MCF 10A (cell line): ENCODE measurements at regions of chr7 and their contacts with region 1.

Region 1: DNA sequence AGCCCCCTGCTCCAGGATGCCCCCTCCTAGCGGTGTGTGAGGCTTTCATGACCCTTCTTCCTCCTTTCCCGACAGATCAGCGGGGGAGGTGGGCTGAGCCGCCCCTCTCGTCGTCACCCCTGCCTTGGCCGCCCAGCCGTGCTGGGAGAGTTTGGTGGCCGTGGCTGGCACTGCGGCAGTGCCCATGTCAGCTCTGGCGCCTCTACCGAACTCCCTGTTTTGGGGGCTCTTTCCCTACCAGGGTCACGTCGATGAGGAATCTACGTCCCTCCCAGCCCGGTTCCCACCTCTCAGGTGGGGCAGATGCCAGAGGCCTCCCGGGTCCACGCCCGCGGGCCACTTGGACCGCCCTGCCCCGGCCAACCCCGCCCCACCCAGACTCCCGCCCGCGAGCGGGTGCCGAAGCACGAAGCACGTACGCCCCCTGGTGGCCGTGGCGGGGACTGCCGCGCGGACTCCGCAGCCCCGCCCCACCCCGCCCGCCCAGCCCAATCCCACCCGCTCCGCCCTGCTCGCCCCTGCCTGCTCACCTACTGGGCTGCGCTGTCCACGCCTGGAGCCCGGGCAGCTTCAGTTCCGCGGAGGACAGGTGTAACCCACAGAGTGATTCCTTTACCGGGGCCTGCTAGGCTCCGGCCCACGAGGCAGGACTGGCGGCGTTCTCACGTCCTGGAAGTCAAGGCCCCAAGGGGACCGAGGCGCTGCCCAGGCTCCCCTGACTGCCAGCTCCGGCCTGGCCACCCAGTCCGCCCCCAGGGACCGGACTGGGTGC is 127.1 kb downstream of the UBE2H start:
- DNase-seq: peak; percentile 72
- H3K4me3 Mint-ChIP-seq: peak overlapping the region; percentile 89
- H3K27ac Mint-ChIP-seq: peak overlapping the region; percentile 5
- H3K4me1 Mint-ChIP-seq: peaks cover 20% of the 10 kb centered on the region
- H3K27me3 Mint-ChIP-seq: no peaks in the 10 kb centered on the region
- CTCF ChIP-seq: peak; percentile 91

Region 2: DNA sequence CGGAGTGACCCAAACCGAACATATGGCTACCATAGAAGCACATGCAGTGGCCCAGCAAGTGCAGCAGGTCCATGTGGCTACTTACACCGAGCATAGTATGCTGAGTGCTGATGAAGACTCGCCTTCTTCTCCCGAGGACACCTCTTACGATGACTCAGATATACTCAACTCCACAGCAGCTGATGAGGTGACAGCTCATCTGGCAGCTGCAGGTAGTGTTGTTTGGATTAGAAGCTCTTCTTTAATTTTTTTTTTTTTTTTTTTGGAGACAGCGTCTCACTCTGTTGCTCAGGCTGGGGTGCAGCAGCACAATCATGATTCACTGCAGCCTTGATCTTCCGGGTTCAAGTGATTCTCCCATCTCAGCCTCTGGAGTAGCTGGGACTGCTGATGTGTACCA is 168.3 kb before region 1 on chr7:
- CTCF ChIA-PET with region 1: interaction called, 10 read pairs
- POLR2A ChIA-PET with region 1: no interaction called
- intact Hi-C with region 1: no loop called
- DNase-seq: peak; percentile 83
- H3K4me3 Mint-ChIP-seq: no peak overlapping the region
- H3K27ac Mint-ChIP-seq: peak overlapping the region; percentile 53
- H3K4me1 Mint-ChIP-seq: peaks cover 9% of the 10 kb centered on the region
- H3K27me3 Mint-ChIP-seq: no peaks in the 10 kb centered on the region
- CTCF ChIP-seq: no peak

Region 3: DNA sequence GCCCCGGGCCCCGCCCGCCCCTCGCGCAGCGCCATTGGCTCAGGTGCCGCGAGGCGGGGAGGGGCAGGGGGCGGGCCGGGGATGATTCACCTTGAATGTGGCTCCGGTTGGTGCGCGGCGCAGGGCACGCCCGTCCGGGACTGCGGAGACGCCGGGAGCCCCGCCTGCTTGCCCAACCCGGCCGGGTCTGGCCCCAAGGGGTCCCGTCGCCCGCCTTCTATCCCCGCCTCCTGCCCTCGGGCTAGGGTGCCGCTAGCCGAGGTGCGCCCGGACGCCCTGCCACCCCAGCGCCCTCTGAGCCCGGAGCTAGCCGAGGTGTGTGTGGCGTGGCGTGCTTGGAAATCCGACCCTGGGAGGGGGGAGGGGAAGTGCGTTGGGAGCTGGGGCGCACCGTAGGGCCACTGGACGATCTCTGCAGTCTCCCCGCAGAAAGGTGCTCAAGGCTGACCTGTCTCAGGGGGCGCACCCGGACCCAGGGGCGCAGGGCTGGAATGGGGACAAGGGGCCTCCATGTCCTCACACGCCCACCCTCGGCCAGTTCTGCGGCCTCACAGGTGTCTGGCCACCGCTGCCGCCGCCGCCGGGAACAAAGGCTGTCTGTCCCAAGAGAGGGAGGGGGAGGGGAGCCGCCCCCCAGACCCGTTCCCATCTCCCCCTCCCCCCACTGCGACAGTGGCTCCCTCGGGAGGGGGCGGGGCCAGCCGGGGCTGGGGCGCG is 45.3 kb before region 1 on chr7:
- CTCF ChIA-PET with region 1: interaction called, 5 read pairs
- POLR2A ChIA-PET with region 1: interaction called, 9 read pairs
- intact Hi-C with region 1: loop called (anchors 2 kb)
- DNase-seq: peak; percentile 91
- H3K4me3 Mint-ChIP-seq: peak overlapping the region; percentile 68
- H3K27ac Mint-ChIP-seq: no peak overlapping the region
- H3K4me1 Mint-ChIP-seq: no peaks in the 10 kb centered on the region
- H3K27me3 Mint-ChIP-seq: no peaks in the 10 kb centered on the region
- CTCF ChIP-seq: no peak

Region 4: GRCh38 chr7:129853661-129854300 is 28.1 kb after region 1 on chr7:
- CTCF ChIA-PET with region 1: interaction called, 9 read pairs
- POLR2A ChIA-PET with region 1: interaction called, 13 read pairs
- intact Hi-C with region 1: no loop called
- DNase-seq: peak; percentile 97
- H3K4me3 Mint-ChIP-seq: peak overlapping the region; percentile 54
- H3K27ac Mint-ChIP-seq: peak overlapping the region; percentile 92
- H3K4me1 Mint-ChIP-seq: peaks cover 52% of the 10 kb centered on the region
- H3K27me3 Mint-ChIP-seq: no peaks in the 10 kb centered on the region
- CTCF ChIP-seq: no peak

Region 5: GRCh38 chr7:129875745-129876411 is 50.2 kb after region 1 on chr7:
- CTCF ChIA-PET with region 1: interaction called, 17 read pairs
- POLR2A ChIA-PET with region 1: interaction called, 28 read pairs
- intact Hi-C with region 1: no loop called
- DNase-seq: peak; percentile 69
- H3K4me3 Mint-ChIP-seq: peak overlapping the region; percentile 69
- H3K27ac Mint-ChIP-seq: peak overlapping the region; percentile 90
- H3K4me1 Mint-ChIP-seq: peaks cover 35% of the 10 kb centered on the region
- H3K27me3 Mint-ChIP-seq: no peaks in the 10 kb centered on the region
- CTCF ChIP-seq: no peak